Motor neuron (in vitro differentiated cells): ENCODE measurements at regions of chr1 and their contacts with region 1.

Region 1: GRCh38 chr1:146012737-146013403 is 8.7 kb downstream of the HJV start:
- ATAC-seq: peak in 7 of 8 experiments; percentile 44 to 74 (median 53)
- H3K4me3 ChIP-seq: no peak overlapping the region
- H3K27ac ChIP-seq: no peak overlapping the region
- H3K4me1 ChIP-seq: no peaks in the 10 kb centered on the region

Region 2: DNA sequence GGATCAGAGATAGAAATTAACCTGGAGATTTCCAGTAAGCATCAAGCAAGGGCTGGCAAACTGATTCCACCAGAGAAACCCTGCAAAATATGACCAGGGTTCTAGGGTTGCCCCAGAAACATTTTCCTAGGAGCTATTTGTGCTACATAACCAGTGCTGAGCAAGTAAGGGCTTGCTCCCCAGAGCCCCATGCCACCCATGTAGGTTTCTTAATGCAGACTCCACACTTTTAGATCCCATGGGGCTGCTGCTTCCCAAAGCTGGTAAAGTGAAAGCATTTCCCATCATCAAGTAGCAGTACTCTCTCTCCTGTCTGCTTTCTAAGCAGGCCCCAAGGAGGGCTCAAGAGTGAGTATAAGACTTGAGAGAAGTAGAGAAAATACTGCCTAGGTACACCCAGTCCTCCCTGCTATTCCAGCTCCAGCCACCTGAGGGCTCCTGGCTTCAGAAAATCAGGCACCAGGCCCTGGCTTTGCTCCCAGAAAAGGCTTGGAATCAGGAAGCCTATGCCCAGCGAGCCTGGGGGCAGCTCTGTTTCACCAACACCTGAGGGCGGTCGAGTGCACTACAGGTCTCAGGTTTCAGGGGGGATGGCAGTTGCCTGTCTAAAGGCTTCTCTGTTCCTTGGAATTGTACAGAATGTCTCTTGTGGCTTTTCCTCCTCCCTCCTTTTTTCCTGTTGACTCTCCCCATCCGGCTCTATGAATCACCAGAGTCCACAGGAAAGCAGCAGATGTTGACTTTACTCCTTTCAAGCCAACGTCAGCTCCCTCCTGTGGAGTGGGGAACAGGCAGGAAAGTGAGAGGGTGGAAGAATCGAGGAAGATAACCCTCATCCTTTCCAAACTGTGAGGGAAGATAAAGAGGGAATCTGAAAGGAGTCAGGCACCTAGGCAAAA is 121.0 kb before region 1 on chr1:
- in situ Hi-C with region 1: loop called in 2 of 9 experiments (anchors 10 kb)
- ATAC-seq: peak; percentile 91 to 100 (median 98)
- H3K4me3 ChIP-seq: no peak overlapping the region
- H3K27ac ChIP-seq: no peak overlapping the region
- H3K4me1 ChIP-seq: peaks cover 2 to 6% of the 10 kb centered on the region in 2 donors

Region 3: GRCh38 chr1:145918144-145918992 is 94.5 kb before region 1 on chr1 and contains the start of gene PEX11B:
- in situ Hi-C with region 1: loop called in 1 of 9 experiments (anchors 25 kb)
- ATAC-seq: peak; percentile 87 to 94 (median 90)
- H3K4me3 ChIP-seq: peak within 1 kb of the TSS; percentile 43 to 69 (median 61)
- H3K27ac ChIP-seq: peak within 1 kb of the TSS; percentile 62 to 75
- H3K4me1 ChIP-seq: peaks cover 15 to 19% of the 10 kb centered on the region in 2 donors
- total RNA-seq, gene PEX11B: 16.6 to 31.0 (median 23.8) TPM

Region 4: DNA sequence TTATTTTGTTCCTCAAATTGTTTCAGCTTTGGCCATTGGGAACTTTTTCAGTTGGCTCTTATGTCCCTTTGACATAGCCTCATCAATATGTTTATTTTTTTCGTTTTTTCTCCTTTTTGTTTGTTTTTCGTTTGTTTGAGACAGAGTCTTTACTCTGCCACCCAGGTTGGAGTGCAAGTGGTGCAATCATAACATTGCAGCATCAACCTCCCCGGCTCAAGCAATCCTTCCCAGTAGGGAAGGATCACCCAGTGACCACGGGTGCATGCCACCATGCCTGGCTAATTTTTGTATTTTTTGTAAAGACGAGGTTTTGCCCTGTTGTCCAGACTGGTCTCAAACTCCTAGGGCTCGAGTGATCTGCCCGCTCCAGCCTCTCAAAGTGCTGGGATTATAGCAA is 40.3 kb before region 1 on chr1:
- in situ Hi-C with region 1: loop called in 1 of 9 experiments (anchors 5 kb)
- ATAC-seq: no peak
- H3K4me3 ChIP-seq: no peak overlapping the region
- H3K27ac ChIP-seq: no peak overlapping the region
- H3K4me1 ChIP-seq: peaks cover under 1 to 3% of the 10 kb centered on the region in 2 donors